ENCODE measurements at regions of chr15 and their contacts with region 1.

Region 1: DNA sequence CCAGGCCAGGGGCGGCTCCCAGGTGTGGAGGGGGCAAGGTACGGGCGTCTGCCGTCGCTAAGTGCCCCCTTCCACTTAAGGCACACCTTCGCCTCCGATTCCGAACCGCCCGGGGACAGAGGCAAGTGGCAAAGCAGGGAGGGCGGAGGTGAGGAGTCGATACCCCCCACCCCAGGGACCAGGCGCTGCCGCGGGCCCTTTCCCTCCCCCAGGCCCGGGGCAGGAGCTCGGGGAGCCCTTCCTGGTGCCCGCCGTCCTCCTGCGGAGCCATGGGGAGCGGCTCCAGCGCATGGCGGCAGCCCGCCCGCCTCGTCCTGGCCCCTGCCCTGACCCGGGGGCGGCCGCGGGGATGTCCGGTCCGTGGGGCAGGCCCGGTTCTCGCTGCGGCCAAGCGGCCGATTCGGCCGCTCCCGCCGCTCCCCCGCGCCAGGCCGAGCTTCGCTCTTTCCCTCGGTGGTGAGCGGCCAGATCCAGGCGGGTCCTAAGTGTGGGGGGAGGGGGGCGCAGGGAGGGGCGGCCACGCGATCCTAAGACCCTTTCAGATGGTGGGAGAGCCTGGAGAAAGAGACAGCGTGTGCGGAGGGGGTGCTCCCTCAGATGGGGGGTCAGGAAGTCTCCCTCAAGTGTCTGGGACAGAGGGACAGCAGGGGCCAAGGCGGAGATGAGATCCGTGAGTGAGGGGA is 1.2 kb downstream of the NEIL1 start:
- DNase-seq: no peak
- H3K4me3 ChIP-seq: peak overlapping the region; percentile 90 to 94
- H3K27ac ChIP-seq: peak overlapping the region; percentile 42 to 62
- H3K4me1 ChIP-seq: peaks cover 6 to 11% of the 10 kb centered on the region in 2 donors
- H3K27me3 ChIP-seq: no peaks in the 10 kb centered on the region
- CTCF ChIP-seq: no peak

Region 2: DNA sequence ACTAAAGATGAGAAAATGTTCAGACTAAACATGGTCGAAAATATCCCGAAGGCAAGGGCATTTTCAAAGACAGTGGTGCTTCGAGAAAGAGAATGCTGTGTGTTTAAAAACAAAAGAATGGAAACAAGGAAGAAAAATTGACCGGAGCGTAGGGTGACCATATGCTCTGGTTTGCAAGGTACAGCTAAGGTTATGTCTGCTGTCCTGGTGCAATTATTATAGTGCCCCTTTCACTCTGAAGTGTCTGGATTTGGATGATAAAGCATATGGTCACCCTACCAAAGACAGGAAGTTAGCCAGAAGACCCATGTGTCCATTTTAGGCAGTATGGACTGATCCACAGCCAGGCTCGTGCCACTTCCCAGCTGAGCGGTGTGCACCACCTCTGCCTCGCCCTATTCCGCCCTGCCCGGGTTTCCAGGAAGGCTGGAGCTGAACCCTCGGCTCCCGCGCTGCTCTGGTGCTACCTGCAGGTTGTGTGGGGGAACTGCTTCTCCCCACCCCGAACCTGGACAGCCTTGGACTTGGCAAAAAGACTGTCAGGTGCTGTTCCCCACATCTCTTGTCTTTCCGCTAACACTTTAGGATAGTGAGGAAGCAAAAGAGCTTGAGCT is 40.1 kb before region 1 on chr15:
- intact Hi-C with region 1: no loop called
- DNase-seq: no peak
- H3K4me3 ChIP-seq: no peak overlapping the region
- H3K27ac ChIP-seq: no peak overlapping the region
- H3K4me1 ChIP-seq: no peaks in the 10 kb centered on the region
- H3K27me3 ChIP-seq: no peaks in the 10 kb centered on the region
- CTCF ChIP-seq: peak in 1 of 3 experiments; percentile 9

Region 3: DNA sequence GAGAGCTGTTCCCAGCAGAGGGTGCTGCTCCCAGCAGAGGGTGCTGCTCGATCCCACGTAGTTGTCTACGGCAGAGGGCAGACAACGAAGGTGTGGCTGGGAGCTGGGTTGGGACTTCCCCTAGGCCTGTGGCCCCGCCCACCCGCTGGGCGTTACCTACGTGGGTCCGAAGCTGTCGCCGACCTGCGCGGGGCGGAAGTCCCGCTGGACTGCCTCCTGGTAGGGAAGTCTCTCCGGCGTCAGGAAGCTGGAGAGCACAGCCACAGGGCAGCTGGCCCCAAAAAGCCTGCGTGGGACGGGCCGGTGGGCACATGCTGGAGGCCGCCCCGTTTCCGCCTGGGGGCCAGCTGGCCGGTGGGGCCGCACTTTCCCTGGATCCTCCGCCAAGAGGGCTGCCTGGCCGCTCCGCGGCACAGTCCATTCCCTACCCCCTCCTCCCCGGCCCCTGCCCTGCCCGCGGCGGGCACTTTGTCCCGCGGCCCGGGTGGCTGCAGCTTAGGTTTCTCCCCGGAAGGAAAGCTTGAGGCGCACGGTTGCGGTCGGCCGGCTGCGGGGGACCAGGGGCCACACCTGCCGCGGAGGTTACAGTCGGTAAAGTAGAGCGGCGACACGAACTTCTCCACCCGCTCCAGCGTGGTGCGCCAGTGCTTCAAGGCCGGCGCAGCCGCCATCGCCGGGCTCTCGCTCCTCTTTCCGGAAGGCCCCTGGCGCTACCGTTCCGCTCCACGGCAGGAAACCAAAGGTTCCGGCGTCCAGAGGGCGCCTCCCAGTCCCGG is 20.1 kb after region 1 on chr15 and contains the start of gene MAN2C1:
- intact Hi-C with region 1: loop called (anchors 1 kb)
- DNase-seq: peak; percentile 73 to 97
- H3K4me3 ChIP-seq: peak within 1 kb of the TSS; percentile 94 to 98
- H3K27ac ChIP-seq: peak within 1 kb of the TSS; percentile 99
- H3K4me1 ChIP-seq: peaks cover 5 to 8% of the 10 kb centered on the region in 2 donors
- H3K27me3 ChIP-seq: no peaks in the 10 kb centered on the region
- CTCF ChIP-seq: peak; percentile 69 to 82 (median 72)
- total RNA-seq, gene MAN2C1: 447 TPM

Measured in ascending aorta (tissue), 2 donors.